GM10248 (cell line): ENCODE measurements at regions of chr20 and their contacts with region 1.

Region 1: GRCh38 chr20:44747166-44748004 is 1.7 kb downstream of the KCNK15 start:
- DNase-seq: peak; percentile 76
- CTCF ChIP-seq: peak; percentile 76

Region 2: GRCh38 chr20:44422083-44422482 is 325.3 kb before region 1 on chr20:
- CTCF ChIA-PET with region 1: no interaction called
- POLR2A ChIA-PET with region 1: no interaction called
- DNase-seq: no peak
- CTCF ChIP-seq: no peak

Region 3: DNA sequence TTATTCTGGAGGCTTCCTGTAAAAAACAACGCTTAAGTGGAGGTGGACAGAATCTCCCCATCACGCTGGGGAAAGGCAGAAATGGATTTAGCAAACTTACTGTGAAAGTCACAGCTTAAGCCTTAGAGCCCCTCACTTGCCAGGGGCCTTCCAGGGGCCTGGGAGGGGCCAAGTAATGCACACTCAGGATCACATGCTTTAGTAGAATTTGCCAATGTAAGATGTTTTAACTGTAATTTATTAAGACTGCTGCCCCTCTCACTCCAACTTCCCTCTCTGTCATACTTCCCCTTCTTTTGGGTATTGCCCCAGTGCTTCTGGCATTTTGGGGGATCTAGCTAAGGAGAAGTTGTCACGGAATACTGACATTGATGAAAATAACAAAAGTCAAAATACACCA is 83.3 kb before region 1 on chr20:
- CTCF ChIA-PET with region 1: no interaction called
- POLR2A ChIA-PET with region 1: no interaction called
- DNase-seq: no peak
- CTCF ChIP-seq: no peak

Region 4: DNA sequence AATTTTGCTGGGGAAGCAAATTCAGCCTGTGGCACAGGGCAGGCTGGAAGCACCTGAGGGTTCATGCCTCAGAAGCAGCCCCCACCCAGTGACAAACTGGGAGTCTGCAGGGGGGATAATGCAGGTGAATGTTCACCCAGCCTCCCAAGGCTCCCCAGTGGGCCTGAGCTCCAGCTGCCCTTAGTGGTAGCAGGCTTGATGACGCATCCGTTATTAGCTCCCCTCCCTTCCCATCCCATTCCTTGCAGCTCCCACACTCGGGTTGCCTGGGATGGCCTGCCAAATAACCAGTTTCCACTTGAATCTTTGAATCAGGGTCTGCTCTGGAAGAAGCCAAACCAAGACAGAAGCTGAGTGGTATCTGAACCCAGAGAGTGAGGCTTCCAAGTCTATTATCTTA is 14.0 kb after region 1 on chr20:
- CTCF ChIA-PET with region 1: interaction called, 15 read pairs
- POLR2A ChIA-PET with region 1: no interaction called
- DNase-seq: no peak
- CTCF ChIP-seq: no peak

Region 5: DNA sequence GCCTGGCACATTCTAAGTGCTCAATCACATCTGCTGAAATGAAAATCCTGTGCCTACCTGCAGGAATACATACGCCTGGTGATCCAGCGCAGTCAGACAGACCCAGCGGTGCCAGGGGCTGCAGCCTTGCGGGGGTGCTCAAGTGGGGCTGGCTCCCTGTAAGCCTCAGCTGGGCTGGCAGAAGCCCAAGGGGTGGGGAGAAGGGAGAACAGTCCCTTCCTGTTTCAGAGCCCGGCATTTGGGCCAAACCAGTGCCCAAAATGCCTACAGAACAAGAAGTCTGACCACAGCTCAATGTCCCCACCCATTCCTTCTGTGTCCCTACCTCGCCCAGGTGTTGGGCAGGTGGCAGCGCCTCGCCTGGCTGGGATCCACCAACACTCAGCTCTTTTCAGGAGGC is 20.9 kb after region 1 on chr20:
- CTCF ChIA-PET with region 1: interaction called, 11 read pairs
- POLR2A ChIA-PET with region 1: no interaction called
- DNase-seq: no peak
- CTCF ChIP-seq: no peak

Region 6: GRCh38 chr20:44866703-44867335 is 119.4 kb after region 1 on chr20:
- CTCF ChIA-PET with region 1: interaction called, 40 read pairs
- POLR2A ChIA-PET with region 1: no interaction called
- DNase-seq: no peak
- CTCF ChIP-seq: no peak

Region 7: DNA sequence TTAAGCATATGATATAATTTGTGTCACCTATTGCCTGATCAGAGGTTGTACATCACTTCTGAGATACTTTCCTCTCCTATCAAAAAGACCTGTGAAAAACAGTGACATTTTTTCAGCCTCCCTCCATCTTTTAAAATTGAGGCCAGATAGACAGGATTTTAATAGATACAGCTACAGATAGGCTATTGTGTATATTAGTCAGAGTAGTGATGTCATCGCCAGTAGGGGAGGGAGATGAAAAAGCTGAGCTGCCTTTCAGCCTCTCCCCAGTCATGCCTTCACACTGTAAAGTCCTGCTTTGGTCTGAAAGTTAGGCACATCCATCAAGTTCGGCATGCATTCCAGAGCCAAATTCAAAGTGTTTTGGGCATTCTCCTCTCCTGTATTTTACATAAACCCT is 154.6 kb after region 1 on chr20:
- CTCF ChIA-PET with region 1: no interaction called
- POLR2A ChIA-PET with region 1: no interaction called
- DNase-seq: no peak
- CTCF ChIP-seq: no peak